ENCODE measurements at regions of chr1 and their contacts with region 1.

Region 1: DNA sequence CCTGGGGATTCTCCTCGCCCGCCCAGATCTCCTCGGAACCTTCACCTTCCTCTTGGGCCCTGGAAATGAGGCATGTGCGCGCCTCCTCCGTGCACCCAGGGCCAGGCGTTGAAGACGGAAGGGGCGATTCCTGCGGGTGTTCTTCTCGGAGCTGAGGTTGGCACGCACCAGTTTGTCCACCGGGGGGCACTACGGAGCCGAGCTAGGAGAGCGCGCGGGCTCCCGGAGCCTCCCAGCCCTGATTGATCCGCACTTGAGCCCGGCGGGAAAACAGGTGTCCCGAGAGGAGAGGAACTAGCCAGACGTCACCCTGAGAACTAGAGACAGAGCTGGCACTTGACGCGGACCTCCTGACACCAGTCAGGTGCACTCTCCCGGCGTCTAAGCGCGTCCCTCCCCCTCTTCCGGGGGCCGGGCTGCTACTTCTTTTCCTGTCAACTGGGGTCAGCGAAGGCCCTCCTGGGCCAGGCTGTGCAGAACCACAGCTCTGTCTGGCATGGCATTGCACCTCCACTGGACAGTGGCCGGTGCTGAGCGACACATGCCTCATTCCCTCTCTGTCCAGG is 18.3 kb upstream of the SERINC2 start:
- DNase-seq: peak; percentile 47 to 75 (median 64)
- H3K4me3 ChIP-seq: peak overlapping the region; percentile 54
- H3K4me3 Mint-ChIP-seq: peak overlapping the region; percentile 61 to 92 (median 83)
- H3K27ac ChIP-seq: no peak overlapping the region
- H3K27ac Mint-ChIP-seq: peak overlapping the region in 4 of 8 donors; percentile 42 to 63 (median 47)
- H3K4me1 ChIP-seq: peaks cover 5% of the 10 kb centered on the region
- H3K4me1 Mint-ChIP-seq: peaks cover 10% of the 10 kb centered on the region in 3 donors
- H3K27me3 ChIP-seq: no peaks in the 10 kb centered on the region
- H3K27me3 Mint-ChIP-seq: peaks cover 1 to 6% of the 10 kb centered on the region in 2 donors

Region 2: GRCh38 chr1:31227891-31228568 is 166.7 kb before region 1 on chr1:
- CTCF ChIA-PET with region 1: no interaction called
- POLR2A ChIA-PET with region 1: no interaction called
- DNase-seq: no peak
- H3K4me3 ChIP-seq: no peak overlapping the region
- H3K4me3 Mint-ChIP-seq: no peak overlapping the region
- H3K27ac ChIP-seq: no peak overlapping the region
- H3K27ac Mint-ChIP-seq: no peak overlapping the region
- H3K4me1 ChIP-seq: no peaks in the 10 kb centered on the region
- H3K4me1 Mint-ChIP-seq: no peaks in the 10 kb centered on the region
- H3K27me3 ChIP-seq: no peaks in the 10 kb centered on the region
- H3K27me3 Mint-ChIP-seq: peaks cover 9 to 15% of the 10 kb centered on the region in 2 donors

Region 3: DNA sequence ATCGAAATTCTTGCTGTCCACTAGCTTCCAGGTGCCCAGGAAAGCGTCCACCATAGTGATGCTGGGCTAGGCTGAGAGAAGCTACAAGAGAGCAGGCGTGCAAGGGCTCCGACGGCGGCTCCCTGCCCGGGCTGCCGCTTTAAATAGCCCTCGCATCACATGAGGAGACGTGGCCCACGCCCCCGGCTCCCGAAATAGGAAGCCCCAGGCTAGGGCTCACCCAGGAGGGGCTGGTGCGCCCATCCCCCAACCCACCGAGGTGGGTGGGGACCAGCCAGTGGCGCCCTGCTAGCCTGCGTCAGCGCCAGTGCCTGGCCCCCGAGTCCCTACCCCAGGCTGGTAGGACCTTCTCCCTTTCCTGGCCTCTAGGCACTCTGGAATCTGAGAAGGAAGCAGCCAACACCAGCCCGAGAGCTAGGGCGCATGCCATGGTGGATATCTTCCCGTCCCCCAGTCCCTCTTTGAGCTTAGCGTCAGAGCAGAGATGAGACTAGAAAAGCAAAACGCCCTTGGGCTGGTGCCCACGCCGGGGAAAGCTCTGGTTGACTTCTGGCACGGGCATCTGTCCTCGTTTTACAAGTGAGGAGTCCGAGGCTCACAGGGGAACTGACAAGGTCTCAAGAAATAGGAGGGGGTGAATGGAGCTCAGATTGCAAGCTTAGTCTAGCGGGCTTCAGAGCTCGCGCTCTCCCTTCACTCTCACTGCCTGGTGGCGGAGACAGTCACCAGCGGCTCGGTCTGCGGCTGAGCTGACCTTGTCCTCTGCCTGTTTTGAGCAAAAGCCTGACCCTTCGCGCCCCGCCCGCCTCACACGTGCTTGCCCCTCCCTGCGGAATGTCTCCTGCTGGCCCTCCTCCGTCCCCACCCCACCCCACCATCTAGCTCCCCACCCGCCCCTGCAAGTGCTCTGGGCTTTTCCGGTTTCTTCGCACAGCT is 21.5 kb before region 1 on chr1 and contains the start of gene FABP3:
- CTCF ChIA-PET with region 1: interaction called, 14 read pairs
- POLR2A ChIA-PET with region 1: no interaction called
- DNase-seq: peak in 1 of 5 donors; percentile 10
- H3K4me3 ChIP-seq: peak within 1 kb of the TSS; percentile 65
- H3K4me3 Mint-ChIP-seq: peak within 1 kb of the TSS; percentile 54 to 96 (median 87)
- H3K27ac ChIP-seq: no peak within 1 kb of the TSS
- H3K27ac Mint-ChIP-seq: peak within 1 kb of the TSS in 5 of 8 donors; percentile 12 to 94 (median 57)
- H3K4me1 ChIP-seq: peaks cover 8% of the 10 kb centered on the region
- H3K4me1 Mint-ChIP-seq: peaks cover 12 to 19% (median 16%) of the 10 kb centered on the region in 3 donors
- H3K27me3 ChIP-seq: no peaks in the 10 kb centered on the region
- H3K27me3 Mint-ChIP-seq: no peaks in the 10 kb centered on the region
- total RNA-seq, gene FABP3: not detected

Region 4: GRCh38 chr1:31422505-31423319 is 28.0 kb after region 1 on chr1:
- CTCF ChIA-PET with region 1: interaction called, 13 read pairs
- POLR2A ChIA-PET with region 1: no interaction called
- DNase-seq: peak; percentile 33 to 72 (median 48)
- H3K4me3 ChIP-seq: no peak overlapping the region
- H3K4me3 Mint-ChIP-seq: no peak overlapping the region
- H3K27ac ChIP-seq: no peak overlapping the region
- H3K27ac Mint-ChIP-seq: no peak overlapping the region
- H3K4me1 ChIP-seq: no peaks in the 10 kb centered on the region
- H3K4me1 Mint-ChIP-seq: peaks cover 0 to 4% (median 0%) of the 10 kb centered on the region in 3 donors
- H3K27me3 ChIP-seq: peaks cover 11% of the 10 kb centered on the region
- H3K27me3 Mint-ChIP-seq: peaks cover 16 to 58% of the 10 kb centered on the region in 2 donors

Region 5: GRCh38 chr1:31548907-31549808 is 154.4 kb after region 1 on chr1:
- CTCF ChIA-PET with region 1: interaction called, 11 read pairs
- POLR2A ChIA-PET with region 1: no interaction called
- DNase-seq: peak; percentile 72 to 85 (median 75)
- H3K4me3 ChIP-seq: no peak overlapping the region
- H3K4me3 Mint-ChIP-seq: peak overlapping the region in 5 of 7 donors; percentile 22 to 71 (median 58)
- H3K27ac ChIP-seq: no peak overlapping the region
- H3K27ac Mint-ChIP-seq: peak overlapping the region in 3 of 8 donors; percentile 23 to 79 (median 32)
- H3K4me1 ChIP-seq: peaks cover 5% of the 10 kb centered on the region
- H3K4me1 Mint-ChIP-seq: peaks cover 9 to 13% (median 12%) of the 10 kb centered on the region in 3 donors
- H3K27me3 ChIP-seq: peaks cover 5% of the 10 kb centered on the region
- H3K27me3 Mint-ChIP-seq: peaks cover 8 to 18% of the 10 kb centered on the region in 2 donors